ENCODE measurements at regions of chr1 and their contacts with region 1.

Region 1: GRCh38 chr1:160006312-160006940 is 25.4 kb downstream of the PIGM start:
- DNase-seq: peak; percentile 80
- CTCF ChIP-seq: peak; percentile 97

Region 2: DNA sequence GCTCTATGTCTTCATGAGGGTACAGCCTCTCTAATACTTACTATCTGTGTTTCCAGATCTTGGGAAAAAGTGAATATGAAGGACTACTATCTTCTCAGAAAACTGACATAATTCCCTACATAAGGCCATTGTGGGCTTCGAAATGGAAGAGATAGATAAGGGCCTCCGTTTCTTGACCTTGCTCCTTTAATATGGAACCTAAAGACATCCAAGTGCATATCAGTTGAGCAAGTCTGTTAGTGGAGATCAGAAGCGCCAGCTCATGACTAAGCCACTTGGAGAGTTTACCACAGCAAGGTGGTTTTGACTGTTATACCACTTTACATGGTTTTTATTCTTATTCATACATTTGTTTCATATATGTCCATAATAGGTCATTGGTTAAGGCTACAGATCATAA is 739.6 kb before region 1 on chr1:
- in situ Hi-C with region 1: no loop called
- DNase-seq: no peak
- CTCF ChIP-seq: no peak

Region 3: DNA sequence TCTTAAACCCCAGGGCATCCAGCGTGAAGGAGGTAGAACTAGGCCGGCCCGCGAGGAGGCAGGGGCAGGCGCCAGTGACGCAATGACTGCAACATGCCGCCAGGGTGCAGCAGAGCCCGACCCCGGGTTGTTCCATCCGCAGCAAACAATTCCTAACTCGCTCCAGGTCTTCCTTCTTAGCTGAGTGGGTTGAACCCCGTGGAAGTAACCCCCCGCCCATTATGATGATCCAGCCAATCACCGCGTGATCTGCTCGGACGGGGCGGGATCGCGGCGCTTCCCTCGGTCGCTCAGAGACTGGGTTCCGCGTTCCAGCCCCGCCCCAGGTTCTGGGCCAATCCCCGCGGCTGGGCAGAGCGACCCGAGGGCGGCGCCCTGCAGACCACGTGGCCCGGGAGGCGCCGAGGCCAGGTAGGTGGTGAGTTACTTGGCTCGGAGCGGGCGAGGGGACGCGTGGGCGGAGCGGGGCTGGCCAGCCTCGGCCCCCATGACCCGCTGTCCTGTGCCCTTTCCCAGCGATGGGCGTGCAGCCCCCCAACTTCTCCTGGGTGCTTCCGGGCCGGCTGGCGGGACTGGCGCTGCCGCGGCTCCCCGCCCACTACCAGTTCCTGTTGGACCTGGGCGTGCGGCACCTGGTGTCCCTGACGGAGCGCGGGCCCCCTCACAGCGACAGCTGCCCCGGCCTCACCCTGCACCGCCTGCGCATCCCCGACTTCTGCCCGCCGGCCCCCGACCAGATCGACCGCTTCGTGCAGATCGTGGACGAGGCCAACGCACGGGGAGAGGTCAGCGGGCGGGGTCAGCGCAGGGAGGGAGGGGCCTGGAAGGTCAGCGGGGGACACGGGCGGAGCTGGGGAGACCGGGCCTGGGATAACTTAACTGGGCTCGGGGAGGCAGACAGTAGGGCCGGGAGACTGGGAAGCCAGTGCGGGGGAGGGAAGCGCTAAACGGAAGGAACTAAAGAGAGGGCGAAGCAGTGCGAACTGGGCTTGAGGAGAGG is 225.5 kb before region 1 on chr1 and contains the start of gene DUSP23:
- in situ Hi-C with region 1: loop called (anchors 25 kb)
- DNase-seq: peak; percentile 97
- CTCF ChIP-seq: peak; percentile 71

Region 4: GRCh38 chr1:159936273-159936904 is 70.0 kb before region 1 on chr1:
- in situ Hi-C with region 1: loop called (anchors 5 kb)
- DNase-seq: peak; percentile 86
- CTCF ChIP-seq: peak; percentile 99